Endothelial cell of umbilical vein (primary cell): ENCODE measurements at regions of chr7 and their contacts with region 1.

Region 1: DNA sequence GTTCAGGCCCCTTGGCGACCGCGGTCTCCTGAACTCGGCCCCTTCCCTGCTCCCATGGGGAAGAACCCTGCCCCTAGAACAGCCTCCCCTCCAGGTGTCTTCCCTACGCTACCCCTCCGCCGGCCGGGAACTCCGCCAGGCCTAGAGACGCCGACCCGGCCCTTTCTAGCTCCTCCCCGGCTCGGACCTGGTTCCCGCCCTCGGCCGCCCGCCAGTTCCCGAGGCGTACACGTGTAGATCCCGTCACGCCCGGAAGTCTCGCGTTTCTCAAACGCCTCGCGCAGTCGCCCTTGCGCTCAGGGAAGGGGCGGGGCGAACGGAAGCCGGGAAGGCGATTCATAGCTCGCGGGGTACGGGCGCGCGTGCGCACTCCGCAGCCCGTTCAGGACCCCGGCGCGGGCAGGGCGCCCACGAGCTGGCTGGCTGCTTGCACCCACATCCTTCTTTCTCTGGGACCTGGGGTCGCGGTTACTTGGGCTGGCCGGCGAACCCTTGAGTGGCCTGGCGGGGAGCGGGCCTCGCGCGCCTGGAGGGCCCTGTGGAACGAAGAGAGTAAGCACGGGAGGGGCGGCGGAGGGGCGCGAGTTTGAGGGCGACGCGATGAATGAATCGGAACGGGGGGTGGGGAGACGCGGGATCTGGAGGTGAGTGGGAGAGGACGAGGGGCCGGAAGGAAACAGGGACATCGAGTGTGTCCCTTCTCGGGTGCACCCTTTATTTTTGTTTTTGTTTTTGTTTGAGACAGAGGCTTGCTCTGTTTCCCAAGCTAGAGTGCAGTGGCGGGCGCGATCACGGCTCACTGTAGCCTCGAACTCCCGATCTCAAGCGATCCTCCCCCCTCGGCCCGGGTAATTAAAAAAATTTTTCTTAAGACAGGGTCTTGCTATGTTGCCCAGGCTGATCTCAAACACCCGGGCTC is at the start of gene POP7:
- DNase-seq: peak; percentile 98
- H3K4me3 ChIP-seq: peak within 1 kb of the TSS; percentile 54 to 85 (median 65)
- H3K27ac ChIP-seq: peak within 1 kb of the TSS; percentile 49
- H3K4me1 ChIP-seq: peaks cover 12% of the 10 kb centered on the region
- H3K27me3 ChIP-seq: peaks cover 1 to 2% of the 10 kb centered on the region in 2 experiments
- CTCF ChIP-seq: no peak
- POLR2A ChIP-seq: peak; percentile 69
- total RNA-seq, gene POP7: 47.4 and 48.0 TPM in 2 replicates

Region 2: DNA sequence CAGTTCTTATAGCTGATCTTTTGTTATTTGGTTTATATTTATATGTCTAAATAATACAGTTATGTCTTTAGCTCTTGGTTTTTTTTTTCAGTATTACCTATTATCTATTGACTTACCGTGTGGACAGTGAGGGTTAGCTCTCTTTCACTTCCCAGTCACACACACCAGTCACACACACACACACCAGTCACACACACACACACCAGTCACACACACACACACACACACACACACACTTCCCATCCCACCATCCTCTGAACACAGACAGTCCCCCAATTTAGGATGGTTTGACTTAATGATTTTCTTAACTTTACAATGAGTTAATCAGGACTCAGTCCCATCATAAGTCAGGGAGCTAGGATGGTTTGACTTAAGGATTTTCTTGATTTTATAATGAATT is 185.9 kb before region 1 on chr7:
- CTCF ChIA-PET with region 1: no interaction called
- POLR2A ChIA-PET with region 1: no interaction called
- dilution Hi-C with region 1: no loop called
- intact Hi-C with region 1: no loop called
- DNase-seq: no peak
- H3K4me3 ChIP-seq: no peak overlapping the region
- H3K27ac ChIP-seq: no peak overlapping the region
- H3K4me1 ChIP-seq: peaks cover 5% of the 10 kb centered on the region
- H3K27me3 ChIP-seq: no peaks in the 10 kb centered on the region
- CTCF ChIP-seq: no peak
- POLR2A ChIP-seq: no peak

Region 3: GRCh38 chr7:100673300-100673941 is 32.6 kb before region 1 on chr7 and contains the start of gene GNB2:
- CTCF ChIA-PET with region 1: interaction called, 13 read pairs
- POLR2A ChIA-PET with region 1: no interaction called
- dilution Hi-C with region 1: no loop called
- intact Hi-C with region 1: loop called (anchors 1 kb)
- DNase-seq: peak; percentile 99
- H3K4me3 ChIP-seq: peak within 1 kb of the TSS; percentile 70 to 88 (median 86)
- H3K27ac ChIP-seq: peak within 1 kb of the TSS; percentile 89
- H3K4me1 ChIP-seq: peaks cover 4% of the 10 kb centered on the region
- H3K27me3 ChIP-seq: peaks cover 2 to 5% of the 10 kb centered on the region in 2 experiments
- CTCF ChIP-seq: no peak
- POLR2A ChIP-seq: peak; percentile 51
- total RNA-seq, gene GNB2: 297 and 300 TPM in 2 replicates

Region 4: DNA sequence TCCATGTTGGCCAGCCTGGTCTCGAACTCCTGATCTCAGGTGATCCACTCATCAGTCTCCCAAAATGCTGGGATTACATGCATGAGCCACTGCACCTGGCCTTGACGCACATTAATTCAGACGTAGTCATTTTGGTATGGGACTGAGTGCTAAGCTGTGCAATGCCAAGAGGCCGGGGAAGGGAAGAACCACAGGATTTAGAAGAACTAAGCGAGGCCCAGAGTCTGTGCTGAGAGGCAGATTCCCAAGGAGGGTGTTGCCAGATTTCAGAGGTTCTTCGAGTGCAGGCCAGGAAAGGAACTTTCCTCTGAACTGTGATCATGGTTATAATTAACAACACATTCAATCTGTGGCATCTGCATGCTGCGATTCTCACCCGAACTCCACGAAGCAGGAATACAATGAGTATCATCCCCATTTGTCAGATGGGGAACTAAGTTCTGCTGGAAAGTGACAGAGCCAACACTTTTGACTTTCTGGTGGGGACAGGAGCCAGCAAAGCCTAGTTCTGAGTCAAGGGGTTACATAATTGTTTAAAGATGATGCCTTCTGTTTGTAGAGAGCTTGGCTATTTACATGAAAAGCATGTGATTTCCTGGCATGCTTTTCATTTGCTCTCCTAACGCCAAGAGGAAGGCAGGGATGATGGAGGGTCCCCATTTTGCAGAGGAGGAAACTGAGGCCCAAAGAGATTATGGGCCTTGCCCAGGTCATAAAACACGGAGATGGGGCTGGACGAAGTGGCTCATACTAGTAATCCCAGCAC is 21.2 kb after region 1 on chr7:
- CTCF ChIA-PET with region 1: interaction called, 90 read pairs
- POLR2A ChIA-PET with region 1: interaction called, 3 read pairs
- dilution Hi-C with region 1: no loop called
- intact Hi-C with region 1: loop called (anchors 1 kb)
- DNase-seq: no peak
- H3K4me3 ChIP-seq: no peak overlapping the region
- H3K27ac ChIP-seq: no peak overlapping the region
- H3K4me1 ChIP-seq: no peaks in the 10 kb centered on the region
- H3K27me3 ChIP-seq: peaks cover 4 to 11% of the 10 kb centered on the region in 2 experiments
- CTCF ChIP-seq: no peak
- POLR2A ChIP-seq: no peak

Region 5: DNA sequence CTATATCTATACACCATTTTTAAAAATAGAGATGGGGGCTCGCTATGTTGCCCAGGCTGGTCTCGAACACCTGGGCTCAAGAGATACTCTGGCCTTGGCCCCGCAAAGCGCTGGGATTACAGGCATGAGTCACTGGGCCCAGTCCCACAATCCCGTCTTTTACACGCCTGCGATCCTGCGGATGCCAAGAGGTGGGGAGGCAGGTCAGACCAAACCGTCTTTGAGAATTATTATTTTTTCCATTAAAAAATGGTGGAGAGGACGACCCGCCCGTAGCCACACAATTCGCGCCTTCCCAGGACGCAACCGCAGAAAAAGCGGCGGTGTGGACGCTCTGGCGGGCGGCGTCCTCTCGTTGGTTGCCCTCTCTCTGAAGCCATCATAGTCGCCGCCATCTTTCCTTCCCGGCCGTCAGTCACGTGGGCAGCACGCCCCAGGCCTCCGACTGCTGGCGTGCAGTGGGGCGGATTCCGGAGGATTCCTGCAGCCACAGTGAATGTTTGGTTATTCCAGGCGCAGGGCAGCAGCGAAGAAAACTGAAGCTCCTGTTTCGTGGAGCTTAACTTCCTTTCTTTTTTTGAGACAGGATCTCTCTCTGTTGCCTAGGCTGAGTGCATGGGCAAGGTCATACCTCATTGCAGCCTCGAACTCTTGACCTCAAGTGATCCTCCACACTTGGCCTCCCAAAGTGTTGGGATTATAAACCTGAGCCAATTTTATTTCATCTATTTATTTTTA is 131.3 kb after region 1 on chr7:
- CTCF ChIA-PET with region 1: interaction called, 9 read pairs
- POLR2A ChIA-PET with region 1: no interaction called
- dilution Hi-C with region 1: loop called (anchors 25 kb)
- intact Hi-C with region 1: no loop called
- DNase-seq: peak; percentile 92
- H3K4me3 ChIP-seq: peak overlapping the region in 1 of 3 experiments; percentile 10
- H3K27ac ChIP-seq: peak overlapping the region; percentile 82
- H3K4me1 ChIP-seq: peaks cover 16% of the 10 kb centered on the region
- H3K27me3 ChIP-seq: no peaks in the 10 kb centered on the region
- CTCF ChIP-seq: no peak
- POLR2A ChIP-seq: peak; percentile 77

Region 6: GRCh38 chr7:100874577-100875355 is 168.8 kb after region 1 on chr7 and contains the start of gene SRRT:
- CTCF ChIA-PET with region 1: interaction called, 14 read pairs
- POLR2A ChIA-PET with region 1: interaction called, 3 read pairs
- dilution Hi-C with region 1: no loop called
- intact Hi-C with region 1: no loop called
- DNase-seq: peak; percentile 97
- H3K4me3 ChIP-seq: peak within 1 kb of the TSS; percentile 72 to 84 (median 79)
- H3K27ac ChIP-seq: peak within 1 kb of the TSS; percentile 89
- H3K4me1 ChIP-seq: peaks cover 19% of the 10 kb centered on the region
- H3K27me3 ChIP-seq: no peaks in the 10 kb centered on the region
- CTCF ChIP-seq: peak in 1 of 2 donors; percentile 31
- POLR2A ChIP-seq: peak; percentile 91
- total RNA-seq, gene SRRT: 199 and 202 TPM in 2 replicates

Region 7: DNA sequence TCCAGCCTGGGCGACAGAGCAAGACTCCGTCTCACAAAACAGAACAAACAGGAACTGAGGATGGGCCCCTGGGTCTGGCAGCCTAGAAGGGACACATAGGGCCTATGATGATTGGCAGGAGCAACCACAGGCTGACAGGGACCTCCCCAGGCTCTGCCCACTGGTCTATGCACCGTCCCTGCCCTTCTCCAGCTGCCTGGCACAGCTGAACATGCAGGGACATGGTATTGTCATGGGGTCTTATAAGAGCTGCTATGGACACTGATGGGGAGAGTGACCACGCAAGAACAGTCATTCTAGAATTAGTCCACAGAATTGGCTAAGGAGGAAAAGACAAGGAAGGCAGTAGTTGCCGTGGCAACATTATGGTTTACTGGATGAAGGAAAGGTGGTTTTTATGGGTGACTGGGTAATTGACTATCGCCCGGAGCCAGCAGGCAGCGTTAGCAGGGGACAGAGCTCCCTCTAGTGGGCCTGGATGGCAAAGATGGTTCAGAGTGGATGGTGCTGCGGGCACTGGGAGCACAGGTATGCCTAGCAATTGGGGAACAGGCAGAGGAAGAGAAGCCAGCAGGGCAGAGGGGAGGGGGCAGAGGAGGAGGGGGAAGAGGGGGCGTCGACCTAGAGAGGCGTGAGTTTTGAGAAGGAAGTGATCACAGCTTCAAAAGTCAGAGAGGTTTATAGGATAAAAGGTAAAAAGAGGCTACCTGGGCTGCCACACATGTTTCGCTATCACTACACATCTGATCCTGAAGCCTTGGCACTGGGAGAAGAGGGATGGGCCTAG is 371.5 kb after region 1 on chr7:
- CTCF ChIA-PET with region 1: interaction called, 14 read pairs
- POLR2A ChIA-PET with region 1: no interaction called
- dilution Hi-C with region 1: no loop called
- intact Hi-C with region 1: no loop called
- DNase-seq: peak; percentile 70
- H3K4me3 ChIP-seq: no peak overlapping the region
- H3K27ac ChIP-seq: no peak overlapping the region
- H3K4me1 ChIP-seq: no peaks in the 10 kb centered on the region
- H3K27me3 ChIP-seq: peaks cover under 1 to 4% of the 10 kb centered on the region in 2 experiments
- CTCF ChIP-seq: peak; percentile 88 to 94
- POLR2A ChIP-seq: no peak

Region 8: GRCh38 chr7:101126651-101127280 is 420.8 kb after region 1 on chr7 and contains the start of gene SERPINE1:
- CTCF ChIA-PET with region 1: no interaction called
- POLR2A ChIA-PET with region 1: no interaction called
- dilution Hi-C with region 1: no loop called
- intact Hi-C with region 1: no loop called
- DNase-seq: peak; percentile 98
- H3K4me3 ChIP-seq: peak within 1 kb of the TSS; percentile 87 to 98 (median 88)
- H3K27ac ChIP-seq: peak within 1 kb of the TSS; percentile 83
- H3K4me1 ChIP-seq: peaks cover 57% of the 10 kb centered on the region
- H3K27me3 ChIP-seq: no peaks in the 10 kb centered on the region
- CTCF ChIP-seq: peak; percentile 24 to 26
- POLR2A ChIP-seq: peak; percentile 100
- total RNA-seq, gene SERPINE1: 2,296 and 2,645 TPM in 2 replicates